Aorta (tissue), 5 donors: ENCODE measurements at regions of chr2 and their contacts with region 1.

Region 1: GRCh38 chr2:222319586-222320435 is 21.0 kb upstream of the PAX3 start:
- DNase-seq: no peak
- ATAC-seq: no peak
- H3K4me3 ChIP-seq: peak overlapping the region; percentile 23 to 37
- H3K27ac ChIP-seq: no peak overlapping the region
- H3K4me1 ChIP-seq: no peaks in the 10 kb centered on the region
- H3K27me3 ChIP-seq: no peaks in the 10 kb centered on the region

Region 2: GRCh38 chr2:222372988-222373387 is 53.2 kb after region 1 on chr2:
- intact Hi-C with region 1: no loop called
- DNase-seq: no peak
- ATAC-seq: no peak
- H3K4me3 ChIP-seq: no peak overlapping the region
- H3K27ac ChIP-seq: no peak overlapping the region
- H3K4me1 ChIP-seq: no peaks in the 10 kb centered on the region
- H3K27me3 ChIP-seq: no peaks in the 10 kb centered on the region

Region 3: GRCh38 chr2:222383255-222383654 is 63.4 kb after region 1 on chr2:
- intact Hi-C with region 1: loop called in 1 of 2 experiments (anchors 2 kb)
- DNase-seq: no peak
- ATAC-seq: no peak
- H3K4me3 ChIP-seq: no peak overlapping the region
- H3K27ac ChIP-seq: no peak overlapping the region
- H3K4me1 ChIP-seq: no peaks in the 10 kb centered on the region
- H3K27me3 ChIP-seq: no peaks in the 10 kb centered on the region